OCI-LY7 (cell line): ENCODE measurements at regions of chr19 and their contacts with region 1.

Region 1: DNA sequence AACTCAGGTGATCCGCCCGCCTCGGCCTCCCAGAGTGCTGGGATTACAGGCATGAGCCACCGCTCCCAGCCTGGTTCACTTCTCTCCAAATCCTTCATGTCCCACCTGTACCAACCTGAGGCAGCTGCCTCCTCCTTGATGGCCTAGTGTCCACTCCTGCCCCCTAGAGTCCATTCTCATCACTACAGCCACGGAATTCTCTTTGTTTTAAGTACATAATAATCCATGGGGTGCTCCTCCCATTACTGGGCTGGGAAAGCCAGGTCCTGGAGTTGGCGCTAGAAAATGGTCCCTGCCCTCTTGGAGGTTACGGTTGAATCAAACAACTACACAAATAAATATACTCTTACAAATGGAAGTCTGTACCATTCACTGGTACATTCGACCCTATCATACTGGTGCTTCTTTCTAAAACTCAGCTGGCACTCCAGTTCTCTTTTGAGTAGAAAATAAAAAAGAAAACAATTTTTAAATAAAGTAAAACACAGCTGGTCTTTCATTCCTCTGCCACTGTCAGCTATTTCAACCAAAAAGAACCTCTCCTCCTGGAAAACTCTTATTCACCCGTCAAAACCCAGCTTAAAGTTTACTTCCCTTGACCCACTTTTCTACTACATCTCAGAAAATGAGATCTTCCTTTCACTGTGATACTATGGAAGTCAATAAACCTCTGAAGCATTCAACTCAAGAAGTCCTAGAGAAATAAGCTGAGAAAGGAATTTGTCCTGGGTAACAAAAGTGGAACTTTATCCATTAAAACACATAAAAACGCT is 22.4 kb upstream of the ARHGEF18 start:
- DNase-seq: peak; percentile 71
- H3K4me3 ChIP-seq: no peak overlapping the region
- H3K27ac ChIP-seq: no peak overlapping the region
- H3K4me1 ChIP-seq: peaks cover 12% of the 10 kb centered on the region
- CTCF ChIP-seq: peak; percentile 87

Region 2: GRCh38 chr19:7098701-7099596 is 227.3 kb before region 1 on chr19:
- CTCF ChIA-PET with region 1: no interaction called
- POLR2A ChIA-PET with region 1: interaction called, 10 read pairs
- intact Hi-C with region 1: loop called (anchors 1 kb)
- DNase-seq: peak; percentile 93
- H3K4me3 ChIP-seq: peak overlapping the region; percentile 67
- H3K27ac ChIP-seq: peak overlapping the region; percentile 57
- H3K4me1 ChIP-seq: peaks cover 22% of the 10 kb centered on the region
- CTCF ChIP-seq: no peak

Region 3: DNA sequence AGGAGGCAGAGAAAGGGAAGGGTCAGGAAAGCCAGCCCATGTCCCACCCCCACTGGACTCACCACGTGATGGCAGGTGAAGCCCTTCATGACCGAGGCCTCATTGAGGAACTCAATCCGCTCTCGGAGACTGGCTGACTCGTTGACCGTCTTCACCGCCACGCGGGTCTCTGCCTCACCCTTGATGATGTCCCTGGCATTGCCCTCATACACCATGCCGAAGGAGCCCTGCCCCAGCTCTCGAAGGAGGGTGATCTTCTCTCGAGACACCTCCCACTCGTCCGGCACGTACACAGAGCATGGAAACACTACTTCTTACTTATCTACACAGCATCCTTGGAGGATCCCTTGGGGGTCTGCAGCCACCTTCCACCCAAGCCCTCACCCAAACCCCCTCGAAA is 201.1 kb before region 1 on chr19:
- CTCF ChIA-PET with region 1: no interaction called
- POLR2A ChIA-PET with region 1: no interaction called
- intact Hi-C with region 1: no loop called
- DNase-seq: no peak
- H3K4me3 ChIP-seq: no peak overlapping the region
- H3K27ac ChIP-seq: no peak overlapping the region
- H3K4me1 ChIP-seq: no peaks in the 10 kb centered on the region
- CTCF ChIP-seq: no peak

Region 4: DNA sequence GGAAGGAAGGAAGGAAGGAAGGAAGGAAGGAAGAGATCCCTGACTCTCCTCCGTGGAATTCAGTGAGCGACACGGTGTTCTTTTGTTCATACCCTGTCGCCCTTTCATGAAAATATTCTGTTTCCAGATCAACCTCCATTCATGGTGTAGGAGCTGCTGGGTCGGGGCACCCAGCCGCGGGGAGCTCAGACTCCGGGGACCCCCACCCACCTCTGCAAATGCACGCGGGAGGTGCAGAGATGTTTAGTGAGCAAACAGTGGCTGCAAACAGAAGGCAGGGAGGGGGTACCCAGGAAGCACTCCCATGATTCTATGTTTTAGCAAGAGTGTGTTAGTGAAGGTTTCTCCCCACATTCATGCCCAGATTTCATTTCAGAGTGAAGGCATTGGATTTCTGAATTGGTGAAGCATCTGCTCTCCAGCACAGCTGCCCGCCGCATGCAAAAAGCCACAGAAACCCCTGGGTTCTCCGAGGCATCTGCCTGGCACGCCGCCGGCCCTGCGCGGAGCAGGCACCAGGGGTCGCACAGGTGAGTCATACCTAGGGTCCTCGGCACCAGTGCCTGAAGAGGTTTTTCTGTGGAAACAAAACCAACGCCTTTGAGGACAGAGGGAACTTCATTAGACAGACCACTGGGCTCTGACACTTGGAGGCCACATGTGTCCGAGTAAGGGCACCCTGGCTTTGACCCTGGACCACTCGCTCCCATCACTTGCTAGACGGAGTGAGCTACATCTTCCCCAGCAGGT is 176.2 kb before region 1 on chr19:
- CTCF ChIA-PET with region 1: no interaction called
- POLR2A ChIA-PET with region 1: no interaction called
- intact Hi-C with region 1: loop called (anchors 2 kb)
- DNase-seq: no peak
- H3K4me3 ChIP-seq: no peak overlapping the region
- H3K27ac ChIP-seq: no peak overlapping the region
- H3K4me1 ChIP-seq: no peaks in the 10 kb centered on the region
- CTCF ChIP-seq: no peak

Region 5: DNA sequence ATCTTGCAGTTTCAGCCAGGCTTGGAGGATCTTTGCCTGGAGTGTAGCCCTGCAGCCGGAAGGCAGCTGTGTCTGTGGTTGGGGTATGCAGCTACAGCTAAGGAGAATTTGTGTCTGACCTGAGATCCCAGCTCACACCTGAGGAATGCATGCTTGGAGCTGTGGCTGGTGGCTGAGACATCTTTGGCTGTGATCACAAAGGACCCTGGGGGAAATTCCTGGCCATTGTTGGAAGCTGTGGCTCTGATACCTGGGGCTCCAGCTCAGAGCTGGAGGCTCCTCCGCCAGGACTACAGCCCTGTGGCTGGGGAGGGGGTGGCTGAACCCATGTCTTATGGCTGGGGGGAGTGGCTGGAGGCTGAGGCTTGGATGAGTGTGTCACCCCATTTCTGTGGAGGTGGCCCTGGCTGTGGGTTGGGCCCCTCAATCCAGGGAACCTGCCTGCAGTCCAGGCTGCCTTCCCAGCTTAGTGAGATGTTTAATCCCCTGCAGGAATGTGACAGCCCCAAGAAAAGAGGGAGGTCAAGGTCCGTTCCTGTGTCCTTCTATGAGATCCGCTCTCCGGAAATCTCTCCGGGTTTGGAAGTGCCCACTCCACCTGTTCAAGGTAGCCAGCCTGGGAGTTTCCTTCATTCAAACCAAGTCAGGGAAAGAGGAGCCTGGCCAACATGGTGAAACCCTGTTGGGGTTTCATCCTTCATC is 50.0 kb after region 1 on chr19:
- CTCF ChIA-PET with region 1: no interaction called
- POLR2A ChIA-PET with region 1: no interaction called
- intact Hi-C with region 1: loop called (anchors 1 kb)
- DNase-seq: no peak
- H3K4me3 ChIP-seq: no peak overlapping the region
- H3K27ac ChIP-seq: no peak overlapping the region
- H3K4me1 ChIP-seq: peaks cover 19% of the 10 kb centered on the region
- CTCF ChIP-seq: no peak